Colonic mucosa (tissue), 4 donors: ENCODE measurements at regions of chr1 and their contacts with region 1.

Region 1: GRCh38 chr1:112715264-112716053 is at the start of gene PPM1J:
- DNase-seq: peak; percentile 100
- H3K4me3 ChIP-seq: peak within 1 kb of the TSS; percentile 81
- H3K27ac ChIP-seq: peak within 1 kb of the TSS; percentile 23
- H3K4me1 ChIP-seq: peaks cover 5% of the 10 kb centered on the region
- H3K27me3 ChIP-seq: no peaks in the 10 kb centered on the region
- CTCF ChIP-seq: no peak
- total RNA-seq, gene PPM1J: 0.80 to 1.0 TPM

Region 2: GRCh38 chr1:112803906-112804762 is 88.7 kb after region 1 on chr1:
- intact Hi-C with region 1: loop called (anchors 2 kb)
- DNase-seq: peak; percentile 68
- H3K4me3 ChIP-seq: no peak overlapping the region
- H3K27ac ChIP-seq: no peak overlapping the region
- H3K4me1 ChIP-seq: no peaks in the 10 kb centered on the region
- H3K27me3 ChIP-seq: no peaks in the 10 kb centered on the region
- CTCF ChIP-seq: peak; percentile 72

Region 3: GRCh38 chr1:112849425-112850033 is 134.1 kb after region 1 on chr1:
- intact Hi-C with region 1: no loop called
- DNase-seq: no peak
- H3K4me3 ChIP-seq: peak overlapping the region; percentile 41
- H3K27ac ChIP-seq: no peak overlapping the region
- H3K4me1 ChIP-seq: no peaks in the 10 kb centered on the region
- H3K27me3 ChIP-seq: peaks cover 10% of the 10 kb centered on the region
- CTCF ChIP-seq: no peak

Region 4: DNA sequence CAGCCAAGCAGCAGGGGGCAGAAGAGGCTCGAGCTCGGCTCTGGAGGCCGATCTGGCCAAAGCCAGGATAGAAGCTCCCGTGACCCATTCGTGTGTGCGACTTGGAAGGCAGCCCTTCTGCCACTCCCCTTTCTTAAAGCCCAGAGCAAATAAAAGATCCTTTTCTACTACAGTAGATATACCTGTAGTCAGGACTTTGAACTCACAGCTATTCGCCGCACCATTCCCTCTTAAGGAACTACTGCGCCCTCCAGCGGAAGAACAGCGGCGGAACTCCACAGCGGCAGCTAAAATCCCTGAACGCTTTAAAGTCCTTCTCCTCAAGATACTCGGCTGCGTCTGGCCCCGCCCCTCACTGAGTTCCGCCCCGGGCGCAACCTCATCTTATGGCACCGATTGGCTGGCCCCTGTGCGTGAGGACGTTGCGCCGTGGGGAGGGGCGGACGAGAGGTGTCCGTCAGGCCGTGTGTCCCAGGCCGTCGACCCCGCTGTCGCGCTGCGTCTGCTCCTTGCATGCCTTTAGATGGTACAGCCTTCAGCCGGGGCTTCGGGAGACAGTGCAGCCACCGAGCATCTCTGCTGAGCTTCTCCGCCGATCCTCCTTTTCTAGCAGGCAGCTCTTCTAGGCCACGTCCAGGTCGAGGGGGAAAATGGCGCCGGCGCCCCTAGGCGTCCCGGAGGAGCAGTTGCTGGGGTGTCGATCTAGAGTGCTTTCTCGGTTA is 357.5 kb after region 1 on chr1 and contains the start of gene LRIG2:
- intact Hi-C with region 1: loop called (anchors 5 kb)
- DNase-seq: peak; percentile 100
- H3K4me3 ChIP-seq: peak within 1 kb of the TSS; percentile 91
- H3K27ac ChIP-seq: peak within 1 kb of the TSS; percentile 96
- H3K4me1 ChIP-seq: peaks cover 6% of the 10 kb centered on the region
- H3K27me3 ChIP-seq: no peaks in the 10 kb centered on the region
- CTCF ChIP-seq: peak; percentile 87
- total RNA-seq, gene LRIG2: 12.1 to 13.8 TPM

Region 5: GRCh38 chr1:113677250-113678158 is 962.0 kb after region 1 on chr1:
- intact Hi-C with region 1: loop called (anchors 5 kb)
- DNase-seq: no peak
- H3K4me3 ChIP-seq: no peak overlapping the region
- H3K27ac ChIP-seq: no peak overlapping the region
- H3K4me1 ChIP-seq: no peaks in the 10 kb centered on the region
- H3K27me3 ChIP-seq: no peaks in the 10 kb centered on the region
- CTCF ChIP-seq: peak; percentile 49